ENCODE measurements at regions of chr9 and their contacts with region 1.

Region 1: GRCh38 chr9:76018235-76018634 is 127.8 kb downstream of the PCSK5 start:
- DNase-seq: peak; percentile 5
- H3K4me3 Mint-ChIP-seq: peak overlapping the region; percentile 3
- H3K27ac Mint-ChIP-seq: no peak overlapping the region
- H3K4me1 Mint-ChIP-seq: peaks cover 42% of the 10 kb centered on the region
- H3K27me3 Mint-ChIP-seq: peaks cover 2% of the 10 kb centered on the region

Region 2: DNA sequence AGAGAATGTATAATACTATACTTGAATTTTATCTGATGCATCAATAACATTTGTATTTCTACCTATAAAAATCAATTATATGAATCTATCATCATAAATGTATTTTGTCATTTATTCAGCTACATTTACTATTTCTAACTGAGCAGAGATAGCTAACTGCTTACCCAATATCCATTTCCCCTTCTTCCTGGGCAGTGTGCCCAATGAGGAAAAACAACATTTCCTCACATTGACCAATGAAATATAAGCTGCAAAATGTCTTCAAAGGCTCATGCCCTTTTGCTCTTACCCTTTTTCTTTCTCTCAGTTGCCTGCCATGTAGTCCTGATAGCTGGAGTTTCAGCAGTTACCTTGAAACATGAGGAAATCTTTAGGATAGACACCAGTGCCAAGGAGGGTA is 513.5 kb before region 1 on chr9:
- intact Hi-C with region 1: no loop called
- DNase-seq: no peak
- H3K4me3 Mint-ChIP-seq: no peak overlapping the region
- H3K27ac Mint-ChIP-seq: no peak overlapping the region
- H3K4me1 Mint-ChIP-seq: no peaks in the 10 kb centered on the region
- H3K27me3 Mint-ChIP-seq: peaks cover 2% of the 10 kb centered on the region

Region 3: DNA sequence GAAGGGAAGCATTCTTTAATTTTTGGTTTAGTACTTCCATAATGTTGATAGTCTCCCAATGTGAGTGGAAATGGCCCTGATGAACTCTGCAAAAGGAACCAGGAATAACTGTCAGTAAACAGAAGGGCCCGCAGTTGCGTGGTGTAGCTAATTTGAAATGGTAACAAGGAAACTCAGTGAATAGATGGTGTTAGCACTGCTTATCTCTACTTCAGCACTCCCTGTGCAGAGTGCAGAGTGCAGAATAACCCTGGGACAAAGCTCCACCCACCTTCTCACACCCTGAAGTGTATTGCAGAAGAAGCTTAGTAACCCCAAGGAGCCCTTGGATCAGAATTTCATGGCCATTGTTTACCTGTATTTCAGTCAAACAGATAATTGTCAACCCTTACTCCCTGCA is 31.1 kb after region 1 on chr9:
- intact Hi-C with region 1: loop called (anchors 1 kb)
- DNase-seq: no peak
- H3K4me3 Mint-ChIP-seq: no peak overlapping the region
- H3K27ac Mint-ChIP-seq: no peak overlapping the region
- H3K4me1 Mint-ChIP-seq: no peaks in the 10 kb centered on the region
- H3K27me3 Mint-ChIP-seq: no peaks in the 10 kb centered on the region